Activated CD8-positive, alpha-beta T cell treated with anti-CD3 and anti-CD28 coated beads, Interleukin-2, amount 10 ng/mL, durations not matched to agents 7 days and 5 days (primary cell): ENCODE measurements at regions of chr6 and their contacts with region 1.

Region 1: DNA sequence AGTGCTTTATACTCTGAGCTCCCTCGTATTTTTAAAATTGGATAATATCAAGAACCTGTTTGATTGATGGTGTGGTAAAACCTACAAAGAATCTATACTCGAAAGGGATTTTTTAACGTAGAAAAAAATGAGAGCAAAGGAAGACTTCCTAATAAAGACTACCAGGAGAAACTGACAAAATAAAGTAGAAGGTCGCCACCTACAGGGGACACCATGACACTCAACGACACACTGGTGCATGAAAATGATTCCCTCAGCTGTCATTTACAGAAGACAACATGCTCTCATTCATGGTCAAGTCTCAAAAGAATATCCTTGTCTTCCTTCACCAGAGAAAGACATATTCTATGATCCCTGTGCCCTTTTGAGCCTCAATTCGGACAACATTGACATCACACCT is 10.1 kb upstream of the NHSL1 start:
- DNase-seq: peak; percentile 68
- ATAC-seq: peak; percentile 75
- H3K4me3 Mint-ChIP-seq: no peak overlapping the region
- H3K27ac Mint-ChIP-seq: no peak overlapping the region
- H3K4me1 Mint-ChIP-seq: peaks cover 5% of the 10 kb centered on the region
- H3K27me3 Mint-ChIP-seq: peaks cover 30% of the 10 kb centered on the region

Region 2: DNA sequence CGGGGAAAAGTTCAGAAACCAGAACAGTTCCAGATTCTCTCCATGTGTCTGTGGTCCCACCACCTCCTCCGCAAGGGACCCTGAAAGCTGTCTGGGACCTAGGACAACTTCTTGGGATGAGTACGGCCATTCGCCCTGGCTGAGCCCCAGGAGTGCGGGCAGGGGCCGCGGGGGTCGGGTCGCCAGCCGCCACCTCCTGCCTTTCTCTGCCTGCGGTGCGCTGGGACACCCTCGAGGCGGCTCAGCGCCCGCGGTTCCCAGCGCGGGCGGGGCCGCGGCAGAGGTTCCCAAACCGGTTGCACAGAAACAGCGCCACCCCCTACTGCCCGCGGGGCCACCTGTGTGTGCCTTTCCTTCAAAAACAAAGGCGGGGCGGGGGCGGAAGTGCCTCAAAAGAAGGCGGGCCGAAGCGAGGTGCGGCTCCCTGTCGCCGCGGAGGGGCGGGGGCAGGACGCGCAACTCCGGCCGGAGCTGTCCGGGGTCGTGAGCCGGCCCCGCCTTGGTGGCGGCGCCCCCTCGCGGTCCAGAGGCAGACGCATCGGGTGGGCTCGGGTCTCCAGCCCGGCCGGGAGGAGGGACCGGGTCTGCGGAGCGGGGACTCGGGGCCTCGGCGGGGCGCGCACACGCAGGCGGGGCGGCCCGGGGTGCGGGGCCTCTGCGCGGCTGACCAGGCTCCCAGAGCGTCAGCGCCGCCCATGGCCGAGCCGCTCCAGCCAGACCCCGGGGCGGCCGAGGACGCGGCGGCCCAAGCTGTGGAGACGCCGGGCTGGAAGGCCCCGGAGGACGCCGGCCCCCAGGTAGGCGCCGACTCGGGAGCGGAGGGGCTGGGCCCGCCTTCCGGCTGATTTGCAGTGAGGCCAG is 105.3 kb before region 1 on chr6 and contains the start of gene HEBP2:
- CTCF ChIA-PET with region 1: interaction called, 10 read pairs
- POLR2A ChIA-PET with region 1: no interaction called
- DNase-seq: peak; percentile 97
- ATAC-seq: peak; percentile 95
- H3K4me3 Mint-ChIP-seq: peak within 1 kb of the TSS; percentile 84
- H3K27ac Mint-ChIP-seq: peak within 1 kb of the TSS; percentile 79
- H3K4me1 Mint-ChIP-seq: peaks cover 21% of the 10 kb centered on the region
- H3K27me3 Mint-ChIP-seq: peaks cover 8% of the 10 kb centered on the region
- total RNA-seq, gene HEBP2: 40.8 to 43.5 TPM

Region 3: DNA sequence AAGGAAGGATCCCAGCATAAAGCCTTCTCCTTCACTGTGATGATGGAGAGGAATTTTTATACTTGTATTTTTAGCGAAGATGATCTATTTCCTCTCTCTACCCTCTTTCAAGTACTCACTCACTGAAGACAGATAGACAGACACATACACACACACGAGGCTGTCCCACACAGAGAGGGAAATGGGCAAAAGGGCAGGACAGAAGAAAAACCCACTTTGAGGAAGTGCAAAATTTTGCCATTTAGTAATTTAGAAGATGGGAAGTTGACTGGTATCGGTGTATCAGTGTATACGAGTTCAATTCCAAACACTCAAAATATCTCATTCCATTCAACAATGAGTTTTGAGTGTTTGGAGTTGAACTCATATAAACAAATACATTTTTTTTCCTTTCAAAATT is 74.4 kb before region 1 on chr6:
- CTCF ChIA-PET with region 1: interaction called, 120 read pairs
- POLR2A ChIA-PET with region 1: no interaction called
- DNase-seq: no peak
- ATAC-seq: no peak
- H3K4me3 Mint-ChIP-seq: no peak overlapping the region
- H3K27ac Mint-ChIP-seq: no peak overlapping the region
- H3K4me1 Mint-ChIP-seq: no peaks in the 10 kb centered on the region
- H3K27me3 Mint-ChIP-seq: peaks cover 2% of the 10 kb centered on the region

Region 4: DNA sequence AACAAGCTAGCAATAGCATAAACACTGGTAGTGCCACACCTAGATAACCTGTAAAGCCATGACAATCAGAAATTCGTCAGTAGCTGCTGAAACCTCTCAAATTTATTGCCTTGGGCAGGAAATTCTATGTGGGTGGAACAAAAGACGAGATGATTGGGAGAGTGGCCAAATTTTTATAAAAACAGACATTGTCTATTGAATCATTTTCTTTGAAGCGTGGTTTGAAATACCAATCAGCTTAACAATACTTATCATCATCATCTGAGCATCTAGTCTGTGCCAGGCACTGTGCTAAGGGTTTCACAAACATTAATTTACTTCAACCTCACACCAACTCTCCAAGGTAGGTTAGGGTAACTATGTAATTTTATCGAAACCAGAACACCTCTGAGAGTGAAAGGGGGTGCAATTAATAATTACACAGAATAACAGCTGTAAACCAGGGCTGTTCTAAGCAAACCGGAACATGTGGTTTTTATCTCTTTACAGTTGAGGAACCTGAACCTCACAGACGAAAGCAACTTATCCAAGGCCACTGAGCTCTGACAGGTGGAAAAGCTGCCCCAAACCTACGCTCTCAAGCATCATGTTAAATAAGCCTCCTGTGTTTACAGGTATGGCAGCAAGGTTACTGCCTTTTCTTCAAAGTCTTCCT is 53.5 kb before region 1 on chr6:
- CTCF ChIA-PET with region 1: interaction called, 24 read pairs
- POLR2A ChIA-PET with region 1: interaction called, 11 read pairs
- DNase-seq: peak; percentile 51
- ATAC-seq: peak; percentile 83
- H3K4me3 Mint-ChIP-seq: peak overlapping the region; percentile 58
- H3K27ac Mint-ChIP-seq: peak overlapping the region; percentile 91
- H3K4me1 Mint-ChIP-seq: peaks cover 29% of the 10 kb centered on the region
- H3K27me3 Mint-ChIP-seq: peaks cover 2% of the 10 kb centered on the region

Region 5: GRCh38 chr6:138577151-138577915 is 68.0 kb after region 1 on chr6:
- CTCF ChIA-PET with region 1: no interaction called
- POLR2A ChIA-PET with region 1: no interaction called
- DNase-seq: no peak
- ATAC-seq: no peak
- H3K4me3 Mint-ChIP-seq: no peak overlapping the region
- H3K27ac Mint-ChIP-seq: no peak overlapping the region
- H3K4me1 Mint-ChIP-seq: no peaks in the 10 kb centered on the region
- H3K27me3 Mint-ChIP-seq: peaks cover 12% of the 10 kb centered on the region

Region 6: GRCh38 chr6:138695193-138695592 is 185.8 kb after region 1 on chr6:
- CTCF ChIA-PET with region 1: no interaction called
- POLR2A ChIA-PET with region 1: no interaction called
- DNase-seq: no peak
- ATAC-seq: no peak
- H3K4me3 Mint-ChIP-seq: no peak overlapping the region
- H3K27ac Mint-ChIP-seq: no peak overlapping the region
- H3K4me1 Mint-ChIP-seq: peaks cover 7% of the 10 kb centered on the region
- H3K27me3 Mint-ChIP-seq: peaks cover 41% of the 10 kb centered on the region

Region 7: GRCh38 chr6:138752017-138752416 is 242.6 kb after region 1 on chr6:
- CTCF ChIA-PET with region 1: no interaction called
- POLR2A ChIA-PET with region 1: no interaction called
- DNase-seq: no peak
- ATAC-seq: no peak
- H3K4me3 Mint-ChIP-seq: no peak overlapping the region
- H3K27ac Mint-ChIP-seq: no peak overlapping the region
- H3K4me1 Mint-ChIP-seq: no peaks in the 10 kb centered on the region
- H3K27me3 Mint-ChIP-seq: no peaks in the 10 kb centered on the region